K562 (cell line): ENCODE measurements at regions of chr1 and their contacts with region 1.

Region 1: GRCh38 chr1:47432071-47433036 is 5.5 kb upstream of the FOXD2 start:
- DNase-seq: peak; percentile 71 to 86 (median 78)
- ATAC-seq: peak; percentile 82
- H3K4me3 ChIP-seq: no peak overlapping the region
- H3K27ac ChIP-seq: no peak overlapping the region
- H3K4me1 ChIP-seq: peaks cover 14 to 35% of the 10 kb centered on the region in 2 experiments
- H3K27me3 ChIP-seq: no peaks in the 10 kb centered on the region
- CTCF ChIP-seq: peak; percentile 85 to 94 (median 94)
- EP300 ChIP-seq: no peak
- POLR2A ChIP-seq: no peak
- RAD21 ChIP-seq: peak in 1 of 2 experiments; percentile 81; a peak in 2 of 4 replicates

Region 2: GRCh38 chr1:47515164-47515789 is 82.9 kb after region 1 on chr1:
- CTCF ChIA-PET with region 1: no interaction called
- POLR2A ChIA-PET with region 1: interaction called, 4 read pairs
- in situ Hi-C with region 1: no loop called
- intact Hi-C with region 1: loop called (anchors 5 kb)
- DNase-seq: peak; percentile 28 to 69 (median 49)
- ATAC-seq: peak; percentile 93
- H3K4me3 ChIP-seq: no peak overlapping the region
- H3K27ac ChIP-seq: no peak overlapping the region
- H3K4me1 ChIP-seq: peaks cover 3 to 9% of the 10 kb centered on the region in 2 experiments; a peak in 3 of 5 replicates
- H3K27me3 ChIP-seq: peaks cover 4 to 32% of the 10 kb centered on the region in 2 experiments
- CTCF ChIP-seq: peak; percentile 40 to 61 (median 50)
- EP300 ChIP-seq: no peak
- POLR2A ChIP-seq: no peak
- RAD21 ChIP-seq: peak in 1 of 2 experiments; percentile 42; a peak in 2 of 4 replicates

Region 3: DNA sequence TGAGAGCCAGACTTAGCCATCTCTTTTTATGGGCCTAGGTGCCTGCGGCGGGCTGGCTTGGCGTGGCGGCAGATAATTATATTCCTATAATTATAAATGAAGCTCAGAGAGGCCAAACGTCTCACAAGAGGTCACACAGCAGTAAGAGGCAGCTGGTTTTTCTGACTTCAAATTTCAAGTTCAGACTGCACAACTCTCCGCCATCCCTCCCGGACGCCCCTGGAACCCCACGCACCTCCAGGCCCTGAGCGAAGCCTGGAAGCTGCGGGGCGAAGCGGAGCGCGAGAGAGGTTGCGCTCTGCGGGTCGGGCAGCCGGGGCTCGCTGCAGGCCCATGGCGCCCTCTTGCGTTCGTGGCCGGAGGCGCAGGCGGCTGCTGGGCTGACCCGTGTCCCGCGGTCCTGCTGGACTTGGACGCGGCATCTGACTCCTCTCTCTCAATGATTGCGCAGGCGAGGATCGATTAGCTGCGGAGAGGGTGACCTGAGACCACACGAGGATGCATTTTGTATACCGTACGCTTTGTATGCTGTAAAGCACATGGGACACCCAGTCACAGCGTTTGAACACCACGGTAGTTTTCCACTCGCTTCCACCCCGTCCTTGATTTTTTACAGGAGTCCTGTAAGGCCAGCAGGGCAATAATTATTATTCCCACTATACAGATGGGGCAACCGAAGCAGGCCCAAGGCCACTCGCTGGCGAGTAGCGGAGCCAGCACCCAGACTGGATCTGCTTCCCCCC is 278.1 kb after region 1 on chr1:
- CTCF ChIA-PET with region 1: interaction called, 15 read pairs
- POLR2A ChIA-PET with region 1: no interaction called
- in situ Hi-C with region 1: loop called (anchors 5 kb)
- intact Hi-C with region 1: loop called (anchors 2 kb)
- DNase-seq: peak; percentile 71 to 97 (median 94)
- ATAC-seq: peak; percentile 96
- H3K4me3 ChIP-seq: no peak overlapping the region
- H3K27ac ChIP-seq: no peak overlapping the region
- H3K4me1 ChIP-seq: peaks cover 0 to 24% of the 10 kb centered on the region in 2 experiments; a peak in 2 of 5 replicates
- H3K27me3 ChIP-seq: peaks cover 30 to 60% of the 10 kb centered on the region in 2 experiments; a peak in 4 of 5 replicates
- CTCF ChIP-seq: peak; percentile 93 to 98 (median 96)
- EP300 ChIP-seq: no peak
- POLR2A ChIP-seq: no peak
- RAD21 ChIP-seq: peak; percentile 87 to 95